ENCODE measurements at regions of chr7 and their contacts with region 1.

Region 1: GRCh38 chr7:128883622-128884501 is 21.2 kb downstream of the ATP6V1F start:
- DNase-seq: peak; percentile 90
- H3K4me3 Mint-ChIP-seq: no peak overlapping the region
- H3K27ac Mint-ChIP-seq: no peak overlapping the region
- H3K4me1 Mint-ChIP-seq: no peaks in the 10 kb centered on the region
- H3K27me3 Mint-ChIP-seq: peaks cover 3% of the 10 kb centered on the region

Region 2: GRCh38 chr7:128791121-128791961 is 92.5 kb before region 1 on chr7:
- CTCF ChIA-PET with region 1: interaction called, 5 read pairs
- intact Hi-C with region 1: loop called (anchors 1 kb)
- DNase-seq: peak; percentile 79
- H3K4me3 Mint-ChIP-seq: peak overlapping the region; percentile 82
- H3K27ac Mint-ChIP-seq: no peak overlapping the region
- H3K4me1 Mint-ChIP-seq: peaks cover 3% of the 10 kb centered on the region
- H3K27me3 Mint-ChIP-seq: peaks cover 3% of the 10 kb centered on the region

Region 3: GRCh38 chr7:128807191-128807590 is 76.7 kb before region 1 on chr7:
- CTCF ChIA-PET with region 1: interaction called, 10 read pairs
- intact Hi-C with region 1: no loop called
- DNase-seq: no peak
- H3K4me3 Mint-ChIP-seq: no peak overlapping the region
- H3K27ac Mint-ChIP-seq: no peak overlapping the region
- H3K4me1 Mint-ChIP-seq: no peaks in the 10 kb centered on the region
- H3K27me3 Mint-ChIP-seq: no peaks in the 10 kb centered on the region

Region 4: DNA sequence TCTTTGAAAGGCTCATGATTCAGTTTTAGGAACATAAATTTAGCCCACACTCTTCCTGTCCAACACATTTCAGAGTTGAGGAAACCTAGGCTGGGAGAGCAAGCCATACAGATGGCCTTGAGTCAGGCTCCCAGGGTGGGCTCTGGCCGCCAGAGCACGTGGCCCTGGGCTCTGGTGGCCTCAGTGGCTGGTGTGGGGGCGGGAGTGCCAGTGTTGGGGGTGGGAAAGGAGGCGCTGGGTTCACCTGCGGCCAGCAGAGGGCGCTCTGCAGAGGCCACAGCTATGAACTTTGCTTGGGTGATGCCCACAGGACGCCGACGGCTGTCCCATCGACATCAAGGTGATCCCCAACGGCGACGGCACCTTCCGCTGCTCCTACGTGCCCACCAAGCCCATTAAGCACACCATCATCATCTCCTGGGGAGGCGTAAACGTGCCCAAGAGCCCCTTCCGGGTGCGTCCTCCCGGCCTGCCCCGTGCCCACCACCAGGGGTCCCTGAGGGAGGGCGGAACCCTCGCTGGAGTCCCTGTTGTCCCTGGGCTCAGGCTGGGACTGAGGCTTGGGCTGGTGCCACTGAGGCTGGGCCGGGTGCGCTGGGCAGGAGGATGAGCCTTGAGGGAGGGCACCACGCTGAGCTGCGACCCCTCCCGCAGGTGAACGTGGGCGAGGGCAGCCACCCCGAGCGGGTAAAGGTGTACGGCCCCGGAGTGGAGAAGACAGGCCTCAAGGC is 41.8 kb before region 1 on chr7:
- CTCF ChIA-PET with region 1: interaction called, 19 read pairs
- intact Hi-C with region 1: loop called (anchors 1 kb)
- DNase-seq: peak; percentile 62
- H3K4me3 Mint-ChIP-seq: no peak overlapping the region
- H3K27ac Mint-ChIP-seq: no peak overlapping the region
- H3K4me1 Mint-ChIP-seq: peaks cover 3% of the 10 kb centered on the region
- H3K27me3 Mint-ChIP-seq: no peaks in the 10 kb centered on the region

Region 5: DNA sequence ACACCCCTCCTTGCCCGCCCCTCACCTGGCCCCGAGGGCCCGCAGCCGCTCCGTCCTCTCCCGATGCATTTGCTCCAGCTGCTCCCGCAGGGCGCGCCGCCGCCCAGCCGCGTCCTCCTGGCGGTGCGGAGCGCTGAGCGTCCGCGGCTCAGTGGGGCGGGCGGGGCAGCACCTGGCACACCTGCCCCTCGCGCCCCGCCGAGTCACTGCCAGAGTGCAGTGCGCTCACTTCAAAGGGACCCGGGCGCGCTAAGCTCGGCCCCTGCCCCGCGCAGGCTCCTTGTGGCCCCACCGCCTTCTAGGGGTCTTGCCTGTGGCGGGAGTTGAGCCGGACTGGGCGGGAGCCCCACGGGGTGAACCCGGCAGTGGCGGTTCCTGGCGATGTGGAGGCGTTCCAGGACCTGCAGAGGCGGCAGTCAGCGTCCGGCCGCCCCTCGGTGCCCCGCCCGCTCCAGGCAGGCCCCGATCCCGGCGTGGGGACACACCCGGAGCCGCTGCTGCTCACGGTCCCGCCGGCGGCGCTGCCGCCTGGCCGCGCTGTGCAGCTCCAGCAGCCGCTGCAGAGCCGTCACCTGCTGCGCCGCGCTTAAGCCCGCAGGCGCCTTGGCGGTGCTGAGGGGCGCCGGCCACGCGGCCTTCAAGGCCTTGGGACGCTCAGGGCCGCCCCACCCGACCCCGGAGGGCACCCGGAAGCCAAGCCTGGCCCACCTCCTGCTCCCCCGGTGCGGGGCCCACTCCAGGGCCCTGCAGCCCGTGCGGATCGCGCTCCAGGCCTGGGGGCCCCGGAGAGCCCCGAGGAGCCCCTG is 14.5 kb before region 1 on chr7:
- CTCF ChIA-PET with region 1: interaction called, 25 read pairs
- intact Hi-C with region 1: no loop called
- DNase-seq: peak; percentile 50
- H3K4me3 Mint-ChIP-seq: peak overlapping the region; percentile 55
- H3K27ac Mint-ChIP-seq: no peak overlapping the region
- H3K4me1 Mint-ChIP-seq: peaks cover 9% of the 10 kb centered on the region
- H3K27me3 Mint-ChIP-seq: peaks cover 9% of the 10 kb centered on the region

Region 6: GRCh38 chr7:129780257-129780973 is 896.6 kb after region 1 on chr7:
- CTCF ChIA-PET with region 1: no interaction called
- intact Hi-C with region 1: no loop called
- DNase-seq: peak; percentile 91
- H3K4me3 Mint-ChIP-seq: peak overlapping the region; percentile 73
- H3K27ac Mint-ChIP-seq: no peak overlapping the region
- H3K4me1 Mint-ChIP-seq: peaks cover 40% of the 10 kb centered on the region
- H3K27me3 Mint-ChIP-seq: peaks cover 57% of the 10 kb centered on the region

Measured in activated naive CD4-positive, alpha-beta T cell treated with anti-CD3 and anti-CD28 coated beads for 36 hours (primary cell).